Activated CD8-positive, alpha-beta T cell treated with anti-CD3 and anti-CD28 coated beads, Interleukin-2, amount 10 ng/mL, durations not matched to agents 7 days and 5 days (primary cell): ENCODE measurements at regions of chr20 and their contacts with region 1.

Region 1: DNA sequence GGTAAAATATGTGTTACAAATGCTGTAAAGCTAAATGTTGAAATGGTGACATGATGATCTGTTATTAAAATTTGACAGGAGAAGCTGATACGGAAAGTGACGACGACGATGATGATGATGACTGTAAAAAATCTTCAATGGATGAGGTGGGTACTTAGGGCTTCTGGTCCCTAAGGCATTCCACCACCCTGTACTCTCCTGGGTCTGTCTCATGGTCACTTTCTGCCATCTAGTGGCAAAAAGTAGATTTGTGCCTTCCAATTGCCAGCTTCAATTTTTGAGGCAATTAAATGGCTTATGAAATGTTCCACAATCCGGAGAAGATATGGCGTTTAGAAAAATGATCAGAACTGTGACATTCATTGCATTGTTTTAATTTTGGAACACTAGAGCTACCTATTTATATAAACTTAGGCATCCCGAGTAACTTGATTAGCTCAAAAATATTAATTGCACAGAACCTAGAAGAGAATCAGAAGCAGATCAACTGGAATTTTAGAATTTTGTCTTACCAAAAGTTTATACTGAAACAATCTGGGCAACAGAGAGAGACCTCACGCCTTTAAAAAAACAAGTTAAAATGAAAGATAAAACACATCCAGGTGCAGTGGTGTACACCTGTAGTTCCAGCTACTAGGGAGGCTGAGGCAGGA is 346.5 kb upstream of the PLCB4 start:
- DNase-seq: peak; percentile 44
- ATAC-seq: no peak
- H3K4me3 Mint-ChIP-seq: no peak overlapping the region
- H3K27ac Mint-ChIP-seq: no peak overlapping the region
- H3K4me1 Mint-ChIP-seq: no peaks in the 10 kb centered on the region
- H3K27me3 Mint-ChIP-seq: no peaks in the 10 kb centered on the region

Region 2: GRCh38 chr20:8036771-8037170 is 685.6 kb before region 1 on chr20:
- CTCF ChIA-PET with region 1: interaction called, 11 read pairs
- POLR2A ChIA-PET with region 1: no interaction called
- DNase-seq: no peak
- ATAC-seq: no peak
- H3K4me3 Mint-ChIP-seq: no peak overlapping the region
- H3K27ac Mint-ChIP-seq: no peak overlapping the region
- H3K4me1 Mint-ChIP-seq: peaks cover 3% of the 10 kb centered on the region
- H3K27me3 Mint-ChIP-seq: peaks cover 15% of the 10 kb centered on the region

Region 3: GRCh38 chr20:8131598-8132483 is 590.6 kb before region 1 on chr20 and contains the start of gene PLCB1:
- CTCF ChIA-PET with region 1: interaction called, 34 read pairs
- POLR2A ChIA-PET with region 1: no interaction called
- DNase-seq: peak; percentile 84
- ATAC-seq: peak; percentile 95
- H3K4me3 Mint-ChIP-seq: peak within 1 kb of the TSS; percentile 68
- H3K27ac Mint-ChIP-seq: no peak within 1 kb of the TSS
- H3K4me1 Mint-ChIP-seq: peaks cover 17% of the 10 kb centered on the region
- H3K27me3 Mint-ChIP-seq: peaks cover 42% of the 10 kb centered on the region
- total RNA-seq, gene PLCB1: 0.63 to 1.5 TPM

Region 4: DNA sequence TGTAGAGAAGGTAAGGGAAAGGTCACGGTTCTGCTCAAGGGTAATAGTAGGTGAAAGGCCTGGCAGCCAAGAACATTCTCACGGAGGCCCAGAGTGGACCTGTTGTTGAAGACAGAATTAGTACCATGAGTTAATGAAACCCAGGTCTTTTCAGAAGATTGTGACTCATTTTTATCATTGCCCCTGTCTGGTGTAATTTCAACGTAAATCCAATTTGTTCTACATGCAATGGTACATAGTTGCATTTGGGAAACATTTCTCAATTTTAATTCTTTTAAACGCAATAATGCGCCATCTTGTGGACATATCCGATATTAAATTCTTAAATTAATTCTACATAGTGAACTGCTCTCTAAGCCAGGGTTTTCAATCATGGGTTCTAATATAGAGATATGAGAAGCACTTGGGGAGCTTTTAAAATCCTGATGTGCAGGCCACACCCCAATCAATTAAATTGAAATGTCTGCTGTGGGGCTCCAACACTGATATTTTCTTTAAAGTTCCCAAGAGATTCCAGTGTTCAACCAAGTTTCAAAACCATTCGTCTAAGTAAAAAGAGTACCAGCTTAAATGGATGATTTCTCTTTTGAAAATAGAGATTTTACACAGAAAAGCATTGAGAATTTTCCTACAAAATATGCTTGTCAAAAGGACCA is 332.9 kb before region 1 on chr20:
- CTCF ChIA-PET with region 1: interaction called, 26 read pairs
- POLR2A ChIA-PET with region 1: no interaction called
- DNase-seq: no peak
- ATAC-seq: no peak
- H3K4me3 Mint-ChIP-seq: no peak overlapping the region
- H3K27ac Mint-ChIP-seq: no peak overlapping the region
- H3K4me1 Mint-ChIP-seq: peaks cover 6% of the 10 kb centered on the region
- H3K27me3 Mint-ChIP-seq: peaks cover 3% of the 10 kb centered on the region

Region 5: GRCh38 chr20:8646033-8646441 is 76.4 kb before region 1 on chr20:
- CTCF ChIA-PET with region 1: no interaction called
- POLR2A ChIA-PET with region 1: no interaction called
- DNase-seq: no peak
- ATAC-seq: no peak
- H3K4me3 Mint-ChIP-seq: no peak overlapping the region
- H3K27ac Mint-ChIP-seq: no peak overlapping the region
- H3K4me1 Mint-ChIP-seq: peaks cover 9% of the 10 kb centered on the region
- H3K27me3 Mint-ChIP-seq: no peaks in the 10 kb centered on the region

Region 6: GRCh38 chr20:8709627-8710026 is 12.8 kb before region 1 on chr20:
- CTCF ChIA-PET with region 1: interaction called, 21 read pairs
- POLR2A ChIA-PET with region 1: no interaction called
- DNase-seq: no peak
- ATAC-seq: no peak
- H3K4me3 Mint-ChIP-seq: no peak overlapping the region
- H3K27ac Mint-ChIP-seq: no peak overlapping the region
- H3K4me1 Mint-ChIP-seq: no peaks in the 10 kb centered on the region
- H3K27me3 Mint-ChIP-seq: no peaks in the 10 kb centered on the region

Region 7: DNA sequence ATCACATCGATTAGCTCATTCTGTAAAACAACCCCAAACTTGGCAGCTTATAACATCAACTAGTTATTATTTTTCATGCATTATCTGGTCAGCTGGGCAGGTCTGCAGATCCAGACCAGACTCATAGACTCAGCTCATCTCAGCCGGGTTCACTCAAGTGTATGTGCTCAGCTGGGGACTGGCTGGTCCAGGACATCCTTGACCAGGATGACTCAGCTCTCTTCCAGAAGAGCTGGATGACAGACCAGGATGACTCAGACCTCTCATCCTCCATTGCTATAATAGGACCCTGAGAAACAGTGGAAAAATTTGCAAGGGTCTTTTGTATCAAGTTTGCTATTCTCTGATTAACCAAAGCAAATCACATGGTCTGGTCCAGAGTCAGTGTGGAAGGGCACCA is 34.0 kb after region 1 on chr20:
- CTCF ChIA-PET with region 1: interaction called, 10 read pairs
- POLR2A ChIA-PET with region 1: no interaction called
- DNase-seq: no peak
- ATAC-seq: no peak
- H3K4me3 Mint-ChIP-seq: no peak overlapping the region
- H3K27ac Mint-ChIP-seq: peak overlapping the region; percentile 34
- H3K4me1 Mint-ChIP-seq: no peaks in the 10 kb centered on the region
- H3K27me3 Mint-ChIP-seq: no peaks in the 10 kb centered on the region